ENCODE measurements at regions of chr2 and their contacts with region 1.

Region 1: DNA sequence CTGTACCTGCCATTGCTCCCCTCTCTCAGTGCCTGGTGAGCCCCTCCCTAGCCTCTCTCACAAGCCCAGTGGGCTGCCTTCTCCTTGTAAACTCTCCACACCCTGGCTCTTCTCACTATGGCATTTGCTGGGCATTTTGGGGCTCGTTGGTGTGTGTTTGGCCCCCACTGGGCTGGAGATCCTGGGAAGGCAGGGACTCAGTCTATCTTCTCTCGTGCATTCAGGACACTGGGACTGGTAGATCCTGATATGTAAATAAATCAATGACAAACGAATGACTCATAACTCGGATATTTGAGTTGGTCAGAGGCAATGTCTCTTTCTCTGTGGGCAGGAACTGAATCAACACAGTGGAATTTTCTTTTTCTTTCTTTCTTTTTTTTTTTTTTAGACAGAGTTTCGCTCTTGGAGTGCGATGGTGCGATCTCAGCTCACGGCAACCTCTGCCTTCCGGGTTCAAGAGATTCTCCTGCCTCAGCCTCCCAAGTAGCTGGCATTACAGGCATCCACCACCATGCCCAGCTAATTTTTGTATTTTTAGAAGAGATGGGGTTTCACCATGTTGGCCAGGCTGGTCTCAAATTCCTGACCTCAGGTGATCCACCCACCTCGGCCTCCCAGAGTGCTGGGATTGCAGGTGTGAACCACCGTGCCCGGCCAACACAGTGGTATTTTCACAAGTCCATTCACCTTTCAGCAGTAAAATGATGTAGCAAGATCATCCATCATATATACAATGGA is 144.6 kb upstream of the SPRED2 start:
- DNase-seq: peak; percentile 95
- ATAC-seq: peak; percentile 86
- H3K4me3 ChIP-seq: no peak overlapping the region
- H3K27ac ChIP-seq: peak overlapping the region; percentile 91
- H3K4me1 ChIP-seq: peaks cover 9% of the 10 kb centered on the region
- H3K27me3 ChIP-seq: no peaks in the 10 kb centered on the region
- CTCF ChIP-seq: no peak
- POLR2A ChIP-seq: no peak
- RAD21 ChIP-seq: no peak

Region 2: GRCh38 chr2:64523666-64524603 is 1053.1 kb before region 1 on chr2 and contains the start of gene AFTPH:
- CTCF ChIA-PET with region 1: no interaction called
- POLR2A ChIA-PET with region 1: no interaction called
- dilution Hi-C with region 1: no loop called
- in situ Hi-C with region 1: no loop called
- intact Hi-C with region 1: loop called (anchors 5 kb)
- DNase-seq: peak; percentile 98
- ATAC-seq: peak; percentile 98
- H3K4me3 ChIP-seq: peak within 1 kb of the TSS; percentile 87
- H3K27ac ChIP-seq: peak within 1 kb of the TSS; percentile 68
- H3K4me1 ChIP-seq: no peaks in the 10 kb centered on the region
- H3K27me3 ChIP-seq: peaks cover 5% of the 10 kb centered on the region
- CTCF ChIP-seq: no peak
- POLR2A ChIP-seq: peak; percentile 60
- RAD21 ChIP-seq: no peak
- total RNA-seq, gene AFTPH: 19.9 and 21.9 TPM in 2 replicates

Region 3: DNA sequence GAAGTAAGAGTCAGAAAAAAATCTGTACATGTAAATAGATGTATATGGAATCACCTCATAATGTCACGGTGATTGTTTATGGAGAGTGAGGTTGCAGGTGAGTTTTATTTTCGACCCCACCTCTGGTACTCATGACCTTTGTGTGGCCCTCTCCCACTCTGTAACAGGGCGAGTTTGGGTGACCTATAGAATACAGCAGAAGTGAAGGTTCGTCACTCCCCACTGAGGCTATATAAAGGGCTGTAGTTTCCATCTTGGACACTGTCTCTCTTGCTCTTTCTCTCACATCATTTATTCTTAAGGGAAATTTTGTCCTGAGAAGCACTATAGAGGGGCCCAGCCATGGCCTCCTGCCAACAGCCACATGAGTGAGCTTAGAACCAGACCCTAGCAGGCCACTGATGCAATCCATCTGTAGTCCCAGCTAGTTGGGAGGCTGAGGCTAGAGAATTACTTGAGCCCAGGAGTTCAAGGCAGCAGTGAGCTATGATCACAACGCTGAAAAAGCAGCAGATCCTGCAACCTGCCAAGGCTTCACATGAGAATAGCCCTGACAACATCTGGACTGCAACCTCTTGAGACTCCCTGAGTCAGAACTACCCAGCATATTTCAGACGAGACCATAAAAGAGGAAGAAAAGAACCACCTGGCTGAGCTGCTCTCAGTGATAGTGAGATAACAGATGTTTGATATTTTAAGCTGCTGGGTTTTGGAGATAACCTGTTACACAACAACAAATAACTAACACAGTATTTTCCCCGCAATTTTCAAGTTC is 662.1 kb before region 1 on chr2:
- CTCF ChIA-PET with region 1: interaction called, 4 read pairs
- POLR2A ChIA-PET with region 1: no interaction called
- dilution Hi-C with region 1: no loop called
- in situ Hi-C with region 1: no loop called
- intact Hi-C with region 1: loop called (anchors 1 kb)
- DNase-seq: peak; percentile 68
- ATAC-seq: no peak; the same call in 1 of the 2 replicates
- H3K4me3 ChIP-seq: no peak overlapping the region
- H3K27ac ChIP-seq: no peak overlapping the region
- H3K4me1 ChIP-seq: no peaks in the 10 kb centered on the region
- H3K27me3 ChIP-seq: peaks cover 29% of the 10 kb centered on the region
- CTCF ChIP-seq: no peak
- POLR2A ChIP-seq: no peak
- RAD21 ChIP-seq: no peak

Region 4: DNA sequence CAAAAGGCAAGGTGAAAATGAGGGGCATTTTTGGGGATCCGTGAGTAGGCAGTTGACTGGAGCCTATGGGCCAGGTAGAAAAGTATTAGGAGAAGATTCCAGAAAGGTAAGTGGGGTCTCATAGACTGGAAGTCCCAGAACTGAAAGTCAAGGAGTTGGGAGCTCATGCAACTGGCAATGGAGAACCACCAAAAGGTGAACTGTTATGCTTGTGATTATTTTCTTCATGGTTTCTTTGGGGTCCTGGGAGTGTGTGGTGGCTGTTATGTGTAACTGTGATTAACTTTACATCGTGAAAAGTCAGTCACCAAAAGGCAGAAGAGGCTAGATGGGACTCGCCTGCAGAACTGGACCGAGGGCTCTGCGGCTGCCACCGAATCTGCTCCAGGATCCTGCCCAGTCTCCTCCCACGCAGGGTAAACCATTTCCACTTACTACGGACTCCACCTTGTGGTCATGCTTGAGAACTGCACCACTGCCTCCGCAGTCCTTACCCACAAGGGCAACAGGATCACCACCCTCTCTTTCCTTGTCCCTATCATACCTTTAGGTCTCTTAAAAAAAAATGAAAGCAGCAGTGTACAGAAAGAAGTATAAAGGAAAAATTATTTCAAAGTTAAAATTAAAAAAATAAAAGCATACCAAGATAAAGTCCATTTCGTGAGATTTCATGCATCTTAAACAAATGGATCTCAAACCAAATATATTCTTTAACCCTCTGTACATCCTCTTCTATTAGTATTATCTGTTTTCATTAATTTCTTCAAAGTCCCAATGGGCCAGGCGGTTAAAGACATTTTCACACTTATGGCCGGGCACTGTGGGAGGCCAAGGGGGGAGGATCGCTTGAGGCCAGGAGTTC is 536.4 kb before region 1 on chr2:
- CTCF ChIA-PET with region 1: no interaction called
- POLR2A ChIA-PET with region 1: no interaction called
- dilution Hi-C with region 1: no loop called
- in situ Hi-C with region 1: no loop called
- intact Hi-C with region 1: loop called (anchors 1 kb)
- DNase-seq: peak; percentile 84
- ATAC-seq: peak; percentile 100
- H3K4me3 ChIP-seq: peak overlapping the region; percentile 26; the same call in 1 of the 2 replicates
- H3K27ac ChIP-seq: no peak overlapping the region
- H3K4me1 ChIP-seq: no peaks in the 10 kb centered on the region
- H3K27me3 ChIP-seq: no peaks in the 10 kb centered on the region
- CTCF ChIP-seq: peak; percentile 89
- POLR2A ChIP-seq: no peak
- RAD21 ChIP-seq: peak; percentile 93

Region 5: GRCh38 chr2:65186872-65187851 is 389.9 kb before region 1 on chr2:
- CTCF ChIA-PET with region 1: interaction called, 3 read pairs
- POLR2A ChIA-PET with region 1: no interaction called
- dilution Hi-C with region 1: no loop called
- in situ Hi-C with region 1: no loop called
- intact Hi-C with region 1: loop called (anchors 5 kb)
- DNase-seq: peak; percentile 75
- ATAC-seq: peak; percentile 99
- H3K4me3 ChIP-seq: no peak overlapping the region
- H3K27ac ChIP-seq: no peak overlapping the region
- H3K4me1 ChIP-seq: peaks cover 3% of the 10 kb centered on the region; the same call in 1 of the 2 replicates
- H3K27me3 ChIP-seq: peaks cover 2% of the 10 kb centered on the region; the same call in 1 of the 2 replicates
- CTCF ChIP-seq: peak; percentile 82
- POLR2A ChIP-seq: no peak
- RAD21 ChIP-seq: peak; percentile 74

Region 6: DNA sequence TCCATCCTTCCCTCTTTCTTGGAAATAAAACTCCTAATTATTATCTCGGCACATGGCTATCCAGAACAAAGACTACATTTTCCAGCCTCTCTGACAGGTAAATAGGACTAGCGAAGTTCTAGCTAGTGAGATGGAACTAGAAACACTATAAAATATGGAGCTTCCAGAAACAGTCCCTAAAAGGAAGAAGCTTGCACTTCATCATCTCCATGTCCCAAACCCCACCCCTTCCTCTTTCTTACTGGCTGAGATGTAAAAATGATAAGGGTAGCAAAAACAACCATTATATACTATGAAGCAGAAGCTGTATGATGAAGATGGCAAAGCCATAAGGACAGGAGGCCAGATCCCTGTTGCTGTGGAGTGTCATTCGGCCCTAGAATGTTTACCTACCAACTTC is 361.1 kb before region 1 on chr2:
- CTCF ChIA-PET with region 1: no interaction called
- POLR2A ChIA-PET with region 1: no interaction called
- dilution Hi-C with region 1: no loop called
- in situ Hi-C with region 1: no loop called
- intact Hi-C with region 1: no loop called
- DNase-seq: no peak
- ATAC-seq: no peak
- H3K4me3 ChIP-seq: no peak overlapping the region
- H3K27ac ChIP-seq: no peak overlapping the region
- H3K4me1 ChIP-seq: no peaks in the 10 kb centered on the region
- H3K27me3 ChIP-seq: no peaks in the 10 kb centered on the region
- CTCF ChIP-seq: no peak
- POLR2A ChIP-seq: no peak
- RAD21 ChIP-seq: no peak

Region 7: DNA sequence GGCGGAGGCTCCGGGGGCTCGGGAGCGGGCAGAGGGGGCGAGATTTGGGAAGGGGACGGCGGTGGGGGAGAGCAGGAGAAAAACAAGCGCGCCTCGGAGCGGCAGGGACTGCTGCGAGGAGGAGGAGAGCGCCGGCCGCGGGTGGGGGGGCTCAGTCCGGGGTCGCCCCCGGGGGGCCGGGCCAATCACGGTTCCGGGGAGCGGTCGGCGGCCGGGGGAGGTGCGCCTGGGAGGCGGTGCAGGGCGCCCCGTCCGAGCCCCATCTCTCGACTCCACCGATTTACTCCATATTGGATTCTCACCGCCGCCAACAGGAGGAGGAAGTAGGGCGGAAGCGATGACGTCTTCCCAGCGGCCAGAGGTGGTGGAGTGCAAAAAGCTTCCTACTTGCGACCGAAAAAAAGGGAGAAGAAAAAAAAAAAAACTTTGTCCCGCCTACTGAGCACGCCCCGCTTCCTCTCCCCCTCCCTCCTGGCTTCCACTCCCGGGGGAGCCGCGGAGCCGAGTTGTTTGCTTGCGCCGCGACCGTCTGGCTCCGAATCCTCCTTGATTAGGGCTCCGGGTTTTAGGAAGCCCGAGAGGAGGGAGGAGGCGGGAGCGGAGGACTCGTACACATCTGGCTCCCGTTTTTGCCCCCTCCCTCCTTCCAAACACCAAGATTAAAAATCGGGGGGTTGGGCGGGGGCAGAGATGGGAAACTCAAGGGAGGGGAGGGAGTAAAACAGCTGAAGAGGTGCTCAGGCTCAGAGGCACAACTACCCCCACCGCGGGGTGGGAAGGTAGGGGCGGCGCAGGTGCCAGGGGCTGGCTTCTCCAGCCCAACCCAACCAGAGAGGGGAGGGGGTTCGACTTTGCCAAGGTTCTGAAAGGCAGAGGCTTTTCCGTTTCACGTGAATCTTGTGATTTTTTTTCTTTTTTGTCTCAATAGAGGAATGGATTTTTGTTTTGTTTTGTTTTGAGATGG is 144.5 kb before region 1 on chr2 and contains the start of gene SPRED2:
- CTCF ChIA-PET with region 1: interaction called, 3 read pairs
- POLR2A ChIA-PET with region 1: interaction called, 4 read pairs
- dilution Hi-C with region 1: no loop called
- in situ Hi-C with region 1: no loop called
- intact Hi-C with region 1: loop called (anchors 5 kb)
- DNase-seq: peak; percentile 97
- ATAC-seq: peak; percentile 53
- H3K4me3 ChIP-seq: peak within 1 kb of the TSS; percentile 88
- H3K27ac ChIP-seq: peak within 1 kb of the TSS; percentile 79
- H3K4me1 ChIP-seq: peaks cover 7% of the 10 kb centered on the region; the same call in 1 of the 2 replicates
- H3K27me3 ChIP-seq: no peaks in the 10 kb centered on the region
- CTCF ChIP-seq: 0 out of 2 replicates have a peak, but pooled peaks have one; percentile 6
- POLR2A ChIP-seq: peak; percentile 81
- RAD21 ChIP-seq: peak; percentile 26; the same call in 1 of the 2 replicates
- total RNA-seq, gene SPRED2: 4.7 and 4.8 TPM in 2 replicates

Region 8: GRCh38 chr2:65800998-65801397 is 224.0 kb after region 1 on chr2:
- CTCF ChIA-PET with region 1: no interaction called
- POLR2A ChIA-PET with region 1: no interaction called
- dilution Hi-C with region 1: no loop called
- in situ Hi-C with region 1: no loop called
- intact Hi-C with region 1: loop called (anchors 1 kb)
- DNase-seq: peak; percentile 23
- ATAC-seq: peak; percentile 49; the same call in 1 of the 2 replicates
- H3K4me3 ChIP-seq: no peak overlapping the region
- H3K27ac ChIP-seq: no peak overlapping the region
- H3K4me1 ChIP-seq: no peaks in the 10 kb centered on the region
- H3K27me3 ChIP-seq: peaks cover 5% of the 10 kb centered on the region
- CTCF ChIP-seq: peak; percentile 45
- POLR2A ChIP-seq: no peak
- RAD21 ChIP-seq: peak; percentile 40

Measured in IMR-90 (cell line).